Left colon (tissue), 2 donors: ENCODE measurements at regions of chr10 and their contacts with region 1.

Region 1: DNA sequence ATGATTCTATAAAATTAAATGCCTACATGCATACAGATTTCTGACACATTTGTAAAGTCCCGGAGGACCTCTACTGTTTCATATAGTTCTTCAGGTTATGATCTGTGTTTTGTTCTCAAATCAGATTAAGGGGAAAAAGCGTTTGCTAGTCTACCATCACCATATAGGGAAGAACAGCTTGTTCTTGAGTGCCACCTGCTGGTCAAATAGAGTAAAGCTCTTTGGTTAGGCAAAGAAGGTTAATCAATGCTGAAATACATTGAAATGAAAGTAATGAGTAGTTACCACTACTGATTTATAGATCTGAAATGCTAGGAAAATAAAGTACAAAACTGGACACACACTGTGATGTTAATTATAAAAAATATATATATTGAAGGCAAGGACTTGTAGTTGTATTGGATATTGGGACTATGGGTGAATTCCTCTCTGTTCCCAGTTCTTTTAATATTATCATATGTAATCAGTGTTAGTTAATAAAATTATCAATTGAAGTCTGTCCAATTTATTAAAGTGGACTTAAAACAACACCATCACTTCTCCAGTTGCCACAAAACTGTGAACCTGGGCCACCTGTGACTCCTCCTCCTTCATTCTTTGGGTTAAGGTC is 72.6 kb upstream of the PDLIM1 start:
- DNase-seq: peak in 1 of 2 donors; percentile 19
- ATAC-seq: peak; percentile 81

Region 2: DNA sequence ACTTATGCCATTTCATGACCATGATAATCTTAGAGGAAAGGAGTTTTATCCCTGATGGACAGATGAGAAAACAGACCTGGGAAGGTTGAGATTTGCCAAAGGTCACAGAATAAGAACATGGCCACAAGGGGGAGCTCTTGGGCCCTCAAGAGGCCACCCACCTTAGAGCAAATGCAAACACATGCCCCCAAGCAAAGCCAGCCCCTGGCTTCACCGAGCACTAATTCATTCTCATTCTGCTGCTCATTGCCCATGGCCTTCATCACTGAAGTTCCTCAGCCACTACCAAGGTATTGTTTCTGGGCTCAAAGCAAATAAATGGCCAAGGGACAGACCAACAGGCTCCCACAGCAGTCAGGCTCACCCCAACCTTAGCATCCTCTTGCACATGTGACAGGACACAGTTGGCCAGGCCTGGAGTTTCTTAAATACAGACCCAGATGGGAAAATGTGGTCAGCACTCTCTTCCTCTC is 116.8 kb before region 1 on chr10:
- intact Hi-C with region 1: loop called (anchors 5 to 10 kb)
- DNase-seq: peak in 1 of 2 donors; percentile 90
- ATAC-seq: peak; percentile 46

Region 3: GRCh38 chr10:95487994-95488393 is 124.6 kb after region 1 on chr10:
- intact Hi-C with region 1: no loop called
- DNase-seq: no peak
- ATAC-seq: no peak